SK-N-SH (cell line): ENCODE measurements at regions of chr18 and their contacts with region 1.

Region 1: DNA sequence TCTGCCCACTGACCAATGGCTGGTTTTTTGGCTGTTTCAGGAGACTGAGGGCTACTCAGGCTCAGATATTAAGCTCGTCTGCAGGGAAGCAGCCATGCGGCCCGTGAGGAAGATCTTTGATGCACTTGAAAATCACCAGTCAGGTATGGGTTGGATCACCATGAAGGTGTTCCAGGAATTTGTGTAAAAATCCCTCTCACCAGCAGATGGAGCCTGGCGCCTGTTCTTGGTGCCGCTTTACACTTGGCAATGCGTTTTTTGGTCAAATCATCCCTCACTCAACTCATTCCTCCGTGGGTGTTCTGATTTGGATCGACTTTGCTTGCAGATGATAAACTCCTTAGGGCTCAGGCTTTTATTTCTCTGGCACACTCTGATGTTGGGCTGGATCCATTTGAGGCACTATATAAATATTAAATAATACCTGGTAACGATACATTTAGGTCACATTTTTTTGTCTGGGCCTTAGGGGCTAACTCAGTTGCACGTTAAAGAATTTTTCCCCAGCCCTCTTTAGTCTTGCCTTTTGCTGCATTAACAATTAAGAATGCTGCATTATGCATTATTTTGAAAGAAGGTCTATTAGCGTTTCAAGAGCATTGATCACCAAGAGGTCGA is 50.0 kb downstream of the HDHD2 start:
- DNase-seq: peak; percentile 51
- H3K4me3 ChIP-seq: no peak overlapping the region
- H3K27ac ChIP-seq: no peak overlapping the region
- H3K4me1 ChIP-seq: no peaks in the 10 kb centered on the region
- H3K27me3 ChIP-seq: no peaks in the 10 kb centered on the region
- CTCF ChIP-seq: peak; percentile 75
- EP300 ChIP-seq: no peak
- RAD21 ChIP-seq: peak; percentile 91

Region 2: GRCh38 chr18:47113796-47114540 is 13.6 kb after region 1 on chr18:
- CTCF ChIA-PET with region 1: interaction called, 22 read pairs
- POLR2A ChIA-PET with region 1: no interaction called
- DNase-seq: no peak
- H3K4me3 ChIP-seq: no peak overlapping the region
- H3K27ac ChIP-seq: no peak overlapping the region
- H3K4me1 ChIP-seq: peaks cover 0 to 6% of the 10 kb centered on the region in 2 experiments; a peak in 1 of 4 replicates
- H3K27me3 ChIP-seq: no peaks in the 10 kb centered on the region
- CTCF ChIP-seq: no peak
- EP300 ChIP-seq: no peak
- RAD21 ChIP-seq: no peak